Esophagus squamous epithelium (tissue), 5 donors: ENCODE measurements at regions of chr9 and their contacts with region 1.

Region 1: DNA sequence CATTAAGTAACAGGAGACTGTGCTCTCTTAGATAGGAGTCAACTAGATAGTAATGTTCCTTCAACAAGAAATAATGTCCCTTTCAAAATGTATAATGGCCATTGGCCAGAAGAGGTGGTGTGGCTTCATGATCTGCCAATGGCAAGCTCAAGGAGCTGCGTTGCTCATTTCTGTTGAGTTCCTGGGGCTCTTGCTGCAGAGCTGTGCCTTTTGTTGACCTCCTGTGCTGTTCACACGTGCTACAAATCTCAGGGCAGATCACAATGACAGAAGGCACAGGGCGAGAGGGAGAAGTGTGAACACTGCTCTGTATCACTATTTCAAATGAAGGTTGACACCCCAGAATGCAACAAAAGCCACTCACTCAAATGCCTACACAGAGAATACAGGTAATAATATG is 16.0 kb upstream of the TBC1D2 start:
- DNase-seq: no peak
- H3K4me3 ChIP-seq: no peak overlapping the region
- H3K27ac ChIP-seq: no peak overlapping the region
- H3K4me1 ChIP-seq: no peaks in the 10 kb centered on the region
- H3K27me3 ChIP-seq: peaks cover 0 to 12% (median 0%) of the 10 kb centered on the region in 4 donors
- CTCF ChIP-seq: no peak
- POLR2A ChIP-seq: no peak

Region 2: DNA sequence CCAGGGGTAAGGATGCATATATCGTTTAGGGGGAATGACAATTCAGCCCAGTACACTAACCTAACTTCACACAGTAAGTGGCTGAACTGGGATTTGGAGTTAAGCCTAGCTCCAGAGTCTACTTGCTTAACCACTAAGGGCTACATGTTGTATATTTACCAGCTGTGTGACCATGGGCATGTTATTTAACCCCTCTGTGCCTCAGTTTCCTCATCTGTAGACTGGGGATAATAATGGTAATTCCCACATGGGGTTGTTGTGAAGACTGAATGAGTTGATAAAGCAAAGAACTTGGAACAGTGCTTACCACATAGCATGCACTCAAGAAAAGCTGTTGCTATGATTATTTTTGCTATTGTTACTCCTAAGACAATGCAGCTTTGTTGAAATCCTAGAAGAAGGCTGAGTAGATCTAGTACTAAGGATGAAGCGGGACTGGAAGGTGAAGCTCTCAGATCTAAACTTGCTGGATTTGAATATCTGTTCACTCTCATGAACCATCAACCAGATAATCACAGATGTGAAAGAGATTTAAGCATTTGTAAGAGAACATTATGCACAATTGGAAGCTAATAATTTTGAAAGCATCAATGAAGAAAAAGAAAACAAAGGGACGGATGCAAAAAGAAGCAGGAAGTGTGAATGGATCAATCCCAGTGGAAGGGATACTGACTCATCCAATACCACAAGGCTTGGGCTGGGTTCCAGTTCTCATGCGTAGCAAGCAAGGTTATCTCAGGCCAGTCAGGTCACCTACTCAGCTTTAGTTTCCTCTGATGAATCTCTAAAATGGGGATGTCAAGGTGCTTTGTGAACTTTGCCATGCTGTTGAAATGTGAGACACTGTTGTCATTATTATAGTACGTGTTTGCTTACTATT is 62.5 kb after region 1 on chr9:
- intact Hi-C with region 1: loop called (anchors 10 kb)
- DNase-seq: no peak
- H3K4me3 ChIP-seq: no peak overlapping the region
- H3K27ac ChIP-seq: no peak overlapping the region
- H3K4me1 ChIP-seq: no peaks in the 10 kb centered on the region
- H3K27me3 ChIP-seq: no peaks in the 10 kb centered on the region
- CTCF ChIP-seq: no peak
- POLR2A ChIP-seq: no peak